ENCODE measurements at regions of chr16 and their contacts with region 1.

Region 1: DNA sequence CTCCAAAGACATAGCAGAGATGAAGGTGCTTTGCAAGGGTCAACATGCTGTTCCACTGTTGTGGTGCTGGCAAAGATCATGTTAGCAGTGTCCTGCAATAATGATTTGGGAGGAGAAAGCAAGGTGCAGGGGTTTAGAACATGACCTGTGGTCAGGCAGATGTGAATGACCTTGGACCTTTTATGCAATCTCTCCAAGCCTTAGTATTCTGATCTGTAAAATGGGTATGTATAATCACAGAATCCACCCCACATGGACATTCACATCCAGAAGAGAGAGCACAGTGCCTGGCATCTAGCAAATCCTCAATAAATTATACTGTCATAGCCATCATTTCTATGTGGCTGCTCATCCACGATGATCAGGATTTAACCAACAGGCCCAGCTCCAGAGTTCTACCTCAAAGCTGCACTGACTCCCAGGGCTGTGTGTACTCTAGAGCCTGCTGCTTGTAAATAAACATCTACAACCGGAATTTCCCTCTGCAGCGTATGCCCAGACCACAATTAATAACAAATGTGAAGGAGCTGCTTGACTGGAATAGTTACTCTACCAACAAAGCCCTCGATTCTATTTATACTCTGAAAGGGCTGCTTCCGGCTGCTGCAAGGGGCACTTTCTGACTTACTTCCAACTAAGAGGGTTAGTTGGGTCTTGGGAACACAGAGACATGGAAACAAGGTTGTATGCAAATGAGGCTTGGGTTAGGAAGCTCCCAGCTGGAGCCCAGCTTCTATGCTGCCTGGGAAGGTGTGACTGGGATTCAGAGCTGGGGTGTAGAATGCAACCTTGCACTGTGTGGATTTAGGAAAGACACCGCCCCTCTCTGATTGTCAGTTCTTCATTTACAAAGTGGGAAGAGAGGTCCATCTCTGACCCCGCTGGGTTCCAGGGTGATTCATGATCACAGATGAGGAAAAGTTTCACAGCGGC is 265.2 kb downstream of the XYLT1 start:
- DNase-seq: peak; percentile 71
- H3K4me3 ChIP-seq: no peak overlapping the region
- H3K27me3 ChIP-seq: no peaks in the 10 kb centered on the region
- CTCF ChIP-seq: no peak

Region 2: GRCh38 chr16:16797239-16797638 is 408.3 kb before region 1 on chr16:
- CTCF ChIA-PET with region 1: no interaction called
- POLR2A ChIA-PET with region 1: interaction called, 23 read pairs
- DNase-seq: no peak
- H3K4me3 ChIP-seq: no peak overlapping the region
- H3K27me3 ChIP-seq: no peaks in the 10 kb centered on the region
- CTCF ChIP-seq: no peak

Region 3: DNA sequence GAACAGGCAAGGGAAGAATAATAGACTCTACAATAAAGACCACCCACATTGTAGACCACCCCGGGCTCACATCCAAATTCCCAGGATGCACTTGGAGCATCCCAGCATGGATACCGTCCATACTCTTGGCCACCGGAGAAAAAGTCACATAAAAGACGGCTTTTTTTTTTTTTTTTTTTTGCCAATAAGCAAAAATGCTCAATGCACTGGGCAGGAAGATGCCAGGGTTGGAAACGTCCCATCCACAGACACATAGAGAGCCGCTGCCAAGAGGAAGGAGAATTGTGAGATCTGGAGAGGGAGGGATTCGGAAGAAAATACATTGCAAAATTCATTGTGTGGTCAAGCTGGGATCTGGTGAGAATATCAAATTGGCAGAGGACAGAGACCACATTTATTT is 21.5 kb before region 1 on chr16:
- CTCF ChIA-PET with region 1: no interaction called
- POLR2A ChIA-PET with region 1: no interaction called
- DNase-seq: no peak
- H3K4me3 ChIP-seq: no peak overlapping the region
- H3K27me3 ChIP-seq: no peaks in the 10 kb centered on the region
- CTCF ChIP-seq: no peak

Region 4: DNA sequence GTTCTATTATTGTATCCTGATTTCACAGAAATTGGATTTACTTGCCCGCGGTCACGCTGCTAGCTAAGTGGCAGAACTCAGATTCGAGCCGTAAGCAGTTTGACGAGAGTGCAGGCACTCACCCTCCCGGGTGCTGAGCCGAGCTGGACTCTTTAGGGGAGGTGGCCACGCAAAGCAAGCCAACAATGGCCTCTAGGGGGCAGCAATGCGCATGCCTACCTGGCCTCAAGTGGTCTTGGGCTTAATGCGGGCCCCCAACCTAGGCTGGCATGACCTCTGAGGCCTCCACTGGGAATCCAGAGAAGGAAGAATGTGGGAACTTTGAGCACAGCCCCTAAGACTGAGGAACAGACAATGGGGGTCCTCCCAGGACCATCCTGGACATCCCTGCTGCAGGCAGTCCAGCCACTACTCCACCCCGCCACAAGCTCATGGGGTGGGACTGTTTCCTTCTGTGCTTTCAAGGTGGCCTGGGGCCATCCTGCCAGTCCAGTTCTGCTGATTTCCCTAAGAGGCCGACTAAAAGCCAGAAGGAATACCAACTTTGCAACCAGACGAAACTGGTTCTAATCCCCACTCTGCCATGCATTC is 11.3 kb before region 1 on chr16:
- CTCF ChIA-PET with region 1: interaction called, 17 read pairs
- POLR2A ChIA-PET with region 1: no interaction called
- DNase-seq: no peak
- H3K4me3 ChIP-seq: no peak overlapping the region
- H3K27me3 ChIP-seq: no peaks in the 10 kb centered on the region
- CTCF ChIP-seq: peak; percentile 85

Region 5: DNA sequence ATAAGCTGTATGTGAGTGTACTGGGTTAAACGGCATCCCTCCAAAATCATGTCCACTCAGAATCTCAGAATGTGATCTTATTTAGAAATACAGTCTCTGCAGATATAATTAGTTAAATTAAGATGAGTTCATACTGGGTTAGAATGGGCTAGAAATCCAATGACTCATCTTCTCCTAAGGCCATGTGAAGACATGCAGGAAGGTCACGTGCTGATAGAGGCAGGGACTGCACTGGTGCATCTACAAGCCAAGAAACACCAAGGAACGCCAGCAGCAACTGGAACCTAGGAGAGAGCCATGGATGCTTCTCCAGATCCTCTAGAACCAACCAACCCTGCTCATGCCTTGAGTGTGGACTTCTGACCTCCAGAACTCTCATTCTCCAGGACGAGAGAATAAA is 24.2 kb after region 1 on chr16:
- CTCF ChIA-PET with region 1: no interaction called
- POLR2A ChIA-PET with region 1: no interaction called
- DNase-seq: no peak
- H3K4me3 ChIP-seq: no peak overlapping the region
- H3K27me3 ChIP-seq: no peaks in the 10 kb centered on the region
- CTCF ChIP-seq: no peak